Transverse colon (tissue), 4 donors: ENCODE measurements at regions of chr13 and their contacts with region 1.

Region 1: GRCh38 chr13:58884353-58885209 is 1253.0 kb downstream of the PCDH17 start:
- DNase-seq: no peak
- H3K4me3 ChIP-seq: no peak overlapping the region
- H3K27ac ChIP-seq: no peak overlapping the region
- H3K4me1 ChIP-seq: no peaks in the 10 kb centered on the region
- H3K27me3 ChIP-seq: no peaks in the 10 kb centered on the region
- CTCF ChIP-seq: no peak
- EP300 ChIP-seq: no peak
- POLR2A ChIP-seq: no peak

Region 2: DNA sequence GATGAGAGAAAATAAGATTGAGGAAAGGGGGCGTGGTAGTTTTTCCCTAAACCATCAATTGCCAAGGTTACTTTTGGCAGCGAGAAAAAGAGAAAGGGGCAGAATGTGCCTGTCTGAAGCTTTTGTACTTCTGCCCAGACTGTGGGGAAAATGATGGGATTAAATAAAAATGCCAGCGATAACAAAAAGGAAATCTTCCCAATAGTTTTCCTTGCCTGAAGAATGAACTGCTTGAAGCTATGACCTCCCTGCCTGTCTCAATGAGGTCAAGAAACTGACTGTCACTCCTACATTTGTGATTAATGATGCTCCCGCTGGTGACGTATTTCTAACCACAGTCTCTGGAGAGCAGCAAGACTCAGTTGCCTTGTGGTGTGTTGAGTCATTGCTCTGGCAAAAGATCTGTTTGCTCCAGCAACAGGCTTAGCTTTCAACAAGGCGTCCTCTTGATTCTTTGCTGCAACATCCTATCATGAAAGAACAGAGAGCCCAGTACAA is 227.7 kb after region 1 on chr13:
- in situ Hi-C with region 1: no loop called
- intact Hi-C with region 1: loop called (anchors 5 kb)
- DNase-seq: peak; percentile 11
- H3K4me3 ChIP-seq: no peak overlapping the region
- H3K27ac ChIP-seq: peak overlapping the region in 1 of 4 donors; percentile 47
- H3K4me1 ChIP-seq: no peaks in the 10 kb centered on the region
- H3K27me3 ChIP-seq: no peaks in the 10 kb centered on the region
- CTCF ChIP-seq: no peak
- EP300 ChIP-seq: no peak
- POLR2A ChIP-seq: no peak